ENCODE measurements at regions of chr12 and their contacts with region 1.

Region 1: DNA sequence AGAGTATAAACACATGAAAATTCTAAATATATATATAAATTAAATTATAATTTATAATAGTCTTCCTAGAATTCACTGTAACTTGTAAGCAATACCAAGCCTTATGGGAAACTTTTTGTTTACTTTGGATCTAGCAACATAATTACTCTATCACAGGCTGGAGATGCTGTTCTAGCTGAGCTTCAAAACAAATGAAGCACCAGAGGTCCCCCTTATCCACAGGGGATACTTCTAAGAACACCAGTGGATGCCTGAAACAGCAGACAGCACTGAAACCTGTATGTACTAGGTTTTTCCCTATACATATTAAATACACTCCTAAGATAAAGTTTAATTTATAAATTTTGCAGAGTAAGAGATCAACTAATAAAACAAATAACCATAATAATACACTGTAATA is 96.6 kb downstream of the CDK17 start:
- DNase-seq: no peak
- ATAC-seq: no peak
- H3K4me3 ChIP-seq: no peak overlapping the region
- H3K4me3 Mint-ChIP-seq: no peak overlapping the region
- H3K27ac ChIP-seq: no peak overlapping the region
- H3K27ac Mint-ChIP-seq: no peak overlapping the region
- H3K4me1 ChIP-seq: no peaks in the 10 kb centered on the region
- H3K4me1 Mint-ChIP-seq: peaks cover 35% of the 10 kb centered on the region
- H3K27me3 ChIP-seq: no peaks in the 10 kb centered on the region
- H3K27me3 Mint-ChIP-seq: no peaks in the 10 kb centered on the region
- CTCF ChIP-seq: no peak

Region 2: GRCh38 chr12:95976416-95976832 is 327.2 kb before region 1 on chr12:
- CTCF ChIA-PET with region 1: no interaction called
- POLR2A ChIA-PET with region 1: no interaction called
- intact Hi-C with region 1: no loop called
- DNase-seq: no peak
- ATAC-seq: no peak
- H3K4me3 ChIP-seq: no peak overlapping the region
- H3K4me3 Mint-ChIP-seq: no peak overlapping the region
- H3K27ac ChIP-seq: no peak overlapping the region
- H3K27ac Mint-ChIP-seq: no peak overlapping the region
- H3K4me1 ChIP-seq: no peaks in the 10 kb centered on the region
- H3K4me1 Mint-ChIP-seq: no peaks in the 10 kb centered on the region
- H3K27me3 ChIP-seq: no peaks in the 10 kb centered on the region
- H3K27me3 Mint-ChIP-seq: no peaks in the 10 kb centered on the region
- CTCF ChIP-seq: no peak

Region 3: GRCh38 chr12:96258104-96258961 is 45.3 kb before region 1 on chr12:
- CTCF ChIA-PET with region 1: no interaction called
- POLR2A ChIA-PET with region 1: interaction called, 4 read pairs
- intact Hi-C with region 1: loop called in 1 of 2 experiments (anchors 10 kb)
- DNase-seq: peak in 4 of 14 experiments; percentile 39 to 69 (median 52)
- ATAC-seq: peak; percentile 77
- H3K4me3 ChIP-seq: no peak overlapping the region
- H3K4me3 Mint-ChIP-seq: no peak overlapping the region
- H3K27ac ChIP-seq: peak overlapping the region in 1 of 2 donors; percentile 37
- H3K27ac Mint-ChIP-seq: no peak overlapping the region
- H3K4me1 ChIP-seq: peaks cover 34% of the 10 kb centered on the region
- H3K4me1 Mint-ChIP-seq: peaks cover 13% of the 10 kb centered on the region
- H3K27me3 ChIP-seq: no peaks in the 10 kb centered on the region
- H3K27me3 Mint-ChIP-seq: no peaks in the 10 kb centered on the region
- CTCF ChIP-seq: no peak

Region 4: GRCh38 chr12:96271469-96272199 is 32.0 kb before region 1 on chr12:
- CTCF ChIA-PET with region 1: no interaction called
- POLR2A ChIA-PET with region 1: no interaction called
- intact Hi-C with region 1: no loop called
- DNase-seq: no peak
- ATAC-seq: no peak
- H3K4me3 ChIP-seq: no peak overlapping the region
- H3K4me3 Mint-ChIP-seq: no peak overlapping the region
- H3K27ac ChIP-seq: no peak overlapping the region
- H3K27ac Mint-ChIP-seq: peak overlapping the region; percentile 79
- H3K4me1 ChIP-seq: no peaks in the 10 kb centered on the region
- H3K4me1 Mint-ChIP-seq: peaks cover 57% of the 10 kb centered on the region
- H3K27me3 ChIP-seq: no peaks in the 10 kb centered on the region
- H3K27me3 Mint-ChIP-seq: no peaks in the 10 kb centered on the region
- CTCF ChIP-seq: no peak

Region 5: GRCh38 chr12:96350982-96351381 is 47.3 kb after region 1 on chr12:
- CTCF ChIA-PET with region 1: no interaction called
- POLR2A ChIA-PET with region 1: no interaction called
- intact Hi-C with region 1: loop called in 1 of 2 experiments (anchors 10 kb)
- DNase-seq: peak in 3 of 14 experiments; percentile 27 to 33 (median 32)
- ATAC-seq: peak; percentile 18
- H3K4me3 ChIP-seq: no peak overlapping the region
- H3K4me3 Mint-ChIP-seq: peak overlapping the region; percentile 42
- H3K27ac ChIP-seq: no peak overlapping the region
- H3K27ac Mint-ChIP-seq: peak overlapping the region; percentile 28
- H3K4me1 ChIP-seq: peaks cover 29% of the 10 kb centered on the region
- H3K4me1 Mint-ChIP-seq: peaks cover 88% of the 10 kb centered on the region
- H3K27me3 ChIP-seq: no peaks in the 10 kb centered on the region
- H3K27me3 Mint-ChIP-seq: no peaks in the 10 kb centered on the region
- CTCF ChIP-seq: no peak

Region 6: GRCh38 chr12:96427269-96427729 is 123.6 kb after region 1 on chr12:
- CTCF ChIA-PET with region 1: no interaction called
- POLR2A ChIA-PET with region 1: no interaction called
- intact Hi-C with region 1: no loop called
- DNase-seq: no peak
- ATAC-seq: no peak
- H3K4me3 ChIP-seq: no peak overlapping the region
- H3K4me3 Mint-ChIP-seq: no peak overlapping the region
- H3K27ac ChIP-seq: no peak overlapping the region
- H3K27ac Mint-ChIP-seq: no peak overlapping the region
- H3K4me1 ChIP-seq: peaks cover 4% of the 10 kb centered on the region
- H3K4me1 Mint-ChIP-seq: peaks cover 9% of the 10 kb centered on the region
- H3K27me3 ChIP-seq: no peaks in the 10 kb centered on the region
- H3K27me3 Mint-ChIP-seq: no peaks in the 10 kb centered on the region
- CTCF ChIP-seq: no peak

Region 7: DNA sequence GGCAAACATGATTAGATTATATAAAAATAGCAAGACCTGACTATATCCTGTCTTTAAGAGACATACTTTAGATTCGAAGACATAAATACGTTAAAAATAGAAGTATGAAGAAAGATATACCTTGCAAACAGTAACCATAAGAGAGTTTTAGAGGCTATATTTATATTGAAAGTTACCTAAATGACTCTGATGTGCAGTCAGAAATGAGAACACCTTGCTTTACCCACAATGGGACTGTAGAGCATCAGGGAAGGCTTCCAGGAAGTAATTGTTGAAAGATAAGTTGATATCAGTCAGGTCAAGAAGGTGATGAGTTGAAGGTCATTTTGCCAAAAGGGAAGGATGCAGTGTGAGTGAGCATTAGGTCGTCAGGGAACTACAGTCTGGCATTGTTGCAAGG is 713.6 kb after region 1 on chr12:
- CTCF ChIA-PET with region 1: no interaction called
- POLR2A ChIA-PET with region 1: no interaction called
- intact Hi-C with region 1: no loop called
- DNase-seq: no peak
- ATAC-seq: no peak
- H3K4me3 ChIP-seq: no peak overlapping the region
- H3K4me3 Mint-ChIP-seq: no peak overlapping the region
- H3K27ac ChIP-seq: no peak overlapping the region
- H3K27ac Mint-ChIP-seq: no peak overlapping the region
- H3K4me1 ChIP-seq: no peaks in the 10 kb centered on the region
- H3K4me1 Mint-ChIP-seq: no peaks in the 10 kb centered on the region
- H3K27me3 ChIP-seq: peaks cover 8 to 9% of the 10 kb centered on the region in 2 experiments
- H3K27me3 Mint-ChIP-seq: peaks cover 20% of the 10 kb centered on the region
- CTCF ChIP-seq: no peak

Measured in CD4-positive, alpha-beta T cell (primary cell).